B cell (primary cell): ENCODE measurements at regions of chr4 and their contacts with region 1.

Region 1: DNA sequence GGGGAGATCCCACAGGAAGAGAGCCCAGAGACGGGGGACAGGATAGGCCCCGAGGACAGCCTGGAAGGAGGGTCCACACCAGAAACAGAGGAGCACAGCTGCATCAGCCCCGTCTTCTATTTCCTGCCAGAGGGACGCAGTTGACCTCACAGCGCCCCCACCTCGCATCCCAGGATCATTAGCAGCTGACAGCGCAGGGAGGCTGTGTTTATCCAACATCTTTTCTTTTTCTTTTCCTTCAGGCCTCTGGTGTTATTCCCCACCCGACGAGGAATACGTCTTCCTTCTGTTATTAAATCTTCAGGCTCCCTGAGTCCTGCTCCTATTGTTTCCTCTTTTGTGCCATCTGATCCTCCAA is 75.4 kb downstream of the DCHS2 start:
- DNase-seq: no peak
- ATAC-seq: peak; percentile 25
- H3K4me3 ChIP-seq: peak overlapping the region; percentile 55 to 68 (median 66)
- H3K4me3 Mint-ChIP-seq: peak overlapping the region; percentile 93
- H3K27ac ChIP-seq: peak overlapping the region; percentile 76 to 90
- H3K27ac Mint-ChIP-seq: peak overlapping the region; percentile 95
- H3K4me1 ChIP-seq: peaks cover 13 to 17% of the 10 kb centered on the region in 2 donors
- H3K4me1 Mint-ChIP-seq: peaks cover 37% of the 10 kb centered on the region
- H3K27me3 ChIP-seq: no peaks in the 10 kb centered on the region
- H3K27me3 Mint-ChIP-seq: peaks cover 6% of the 10 kb centered on the region
- CTCF ChIP-seq: no peak

Region 2: DNA sequence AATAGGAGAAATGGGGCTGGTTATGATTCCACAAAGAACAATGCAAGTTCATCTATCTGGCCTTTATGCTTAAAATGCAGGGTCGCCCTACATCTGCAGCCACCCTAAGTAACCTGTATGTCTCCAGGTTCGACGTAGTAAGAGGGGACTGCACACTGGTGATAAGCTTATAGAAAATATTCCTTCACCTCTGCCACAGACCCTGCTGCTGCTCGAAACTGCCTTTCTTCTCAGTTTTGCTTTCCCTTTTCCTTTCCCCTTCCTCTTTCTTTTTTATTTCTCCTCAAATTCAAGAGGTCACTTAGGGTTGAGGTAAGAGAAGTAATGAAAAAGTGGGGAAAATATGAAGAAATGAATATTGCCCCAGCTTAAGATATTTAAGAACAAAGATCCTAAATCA is 48.1 kb before region 1 on chr4:
- CTCF ChIA-PET with region 1: no interaction called
- POLR2A ChIA-PET with region 1: no interaction called
- intact Hi-C with region 1: loop called (anchors 5 kb)
- DNase-seq: peak; percentile 46
- ATAC-seq: peak; percentile 41
- H3K4me3 ChIP-seq: peak overlapping the region in 4 of 5 experiments; percentile 7 to 38 (median 18)
- H3K4me3 Mint-ChIP-seq: peak overlapping the region; percentile 80
- H3K27ac ChIP-seq: peak overlapping the region; percentile 35 to 42
- H3K27ac Mint-ChIP-seq: peak overlapping the region; percentile 83
- H3K4me1 ChIP-seq: peaks cover 22 to 29% of the 10 kb centered on the region in 2 donors
- H3K4me1 Mint-ChIP-seq: peaks cover 24% of the 10 kb centered on the region
- H3K27me3 ChIP-seq: no peaks in the 10 kb centered on the region
- H3K27me3 Mint-ChIP-seq: peaks cover 18% of the 10 kb centered on the region
- CTCF ChIP-seq: no peak

Region 3: DNA sequence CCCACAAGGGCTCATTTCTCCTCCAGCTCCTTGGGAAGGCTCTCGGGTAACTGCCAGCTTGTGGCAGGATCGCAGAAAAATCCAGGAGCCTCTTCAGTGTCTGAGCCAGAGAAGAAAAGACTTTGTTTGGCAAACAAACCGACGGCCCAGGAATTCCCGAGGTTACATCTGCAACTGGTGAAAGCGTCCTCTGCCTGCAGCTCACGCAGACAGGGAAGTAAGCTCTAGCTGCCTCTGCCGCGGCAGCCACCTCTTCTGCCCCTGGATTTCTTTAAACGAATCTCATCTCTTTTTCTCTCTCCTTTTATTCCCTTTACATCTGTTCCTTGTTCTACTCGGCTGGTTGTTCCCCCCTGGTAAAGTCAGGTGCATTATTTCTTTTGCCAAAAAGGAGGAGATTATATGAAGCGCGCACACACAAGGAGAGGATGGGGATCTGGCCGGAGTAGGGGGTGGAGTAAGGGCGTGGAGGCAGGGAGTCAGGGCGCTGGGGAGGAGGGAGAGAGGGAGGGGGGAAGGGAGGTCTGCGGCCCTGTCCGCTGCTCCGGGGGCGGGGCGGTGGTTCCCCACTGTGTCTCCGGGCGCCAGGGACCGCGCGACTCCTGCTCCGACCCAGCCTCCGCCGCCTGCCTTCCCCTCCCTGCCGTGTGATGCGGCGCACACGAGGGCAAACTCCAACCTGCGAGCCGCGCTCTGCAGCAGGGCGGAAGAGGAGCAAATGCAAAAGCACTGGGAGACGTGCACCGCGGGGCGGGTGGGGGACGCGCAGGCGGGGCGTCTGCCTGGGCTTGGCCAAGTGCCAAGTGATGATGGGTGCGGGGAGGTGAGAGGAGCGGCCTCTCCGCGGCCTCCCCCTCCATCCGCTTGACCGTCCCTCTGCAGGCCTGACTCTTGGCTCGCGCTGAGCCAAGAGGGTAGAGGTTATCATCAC is 75.4 kb after region 1 on chr4 and contains the start of gene DCHS2:
- CTCF ChIA-PET with region 1: no interaction called
- POLR2A ChIA-PET with region 1: no interaction called
- intact Hi-C with region 1: loop called (anchors 5 kb)
- DNase-seq: peak; percentile 54
- ATAC-seq: peak; percentile 50
- H3K4me3 ChIP-seq: peak within 1 kb of the TSS; percentile 33 to 71 (median 61)
- H3K4me3 Mint-ChIP-seq: peak within 1 kb of the TSS; percentile 91
- H3K27ac ChIP-seq: no peak within 1 kb of the TSS
- H3K27ac Mint-ChIP-seq: no peak within 1 kb of the TSS
- H3K4me1 ChIP-seq: peaks cover 17 to 23% of the 10 kb centered on the region in 2 donors
- H3K4me1 Mint-ChIP-seq: peaks cover 27% of the 10 kb centered on the region
- H3K27me3 ChIP-seq: peaks cover 0 to 66% (median 30%) of the 10 kb centered on the region in 4 experiments
- H3K27me3 Mint-ChIP-seq: peaks cover 67% of the 10 kb centered on the region
- CTCF ChIP-seq: no peak
- total RNA-seq, gene DCHS2: 0.02 and 0.27 TPM in 2 replicates